ENCODE measurements at regions of chr12 and their contacts with region 1.

Region 1: DNA sequence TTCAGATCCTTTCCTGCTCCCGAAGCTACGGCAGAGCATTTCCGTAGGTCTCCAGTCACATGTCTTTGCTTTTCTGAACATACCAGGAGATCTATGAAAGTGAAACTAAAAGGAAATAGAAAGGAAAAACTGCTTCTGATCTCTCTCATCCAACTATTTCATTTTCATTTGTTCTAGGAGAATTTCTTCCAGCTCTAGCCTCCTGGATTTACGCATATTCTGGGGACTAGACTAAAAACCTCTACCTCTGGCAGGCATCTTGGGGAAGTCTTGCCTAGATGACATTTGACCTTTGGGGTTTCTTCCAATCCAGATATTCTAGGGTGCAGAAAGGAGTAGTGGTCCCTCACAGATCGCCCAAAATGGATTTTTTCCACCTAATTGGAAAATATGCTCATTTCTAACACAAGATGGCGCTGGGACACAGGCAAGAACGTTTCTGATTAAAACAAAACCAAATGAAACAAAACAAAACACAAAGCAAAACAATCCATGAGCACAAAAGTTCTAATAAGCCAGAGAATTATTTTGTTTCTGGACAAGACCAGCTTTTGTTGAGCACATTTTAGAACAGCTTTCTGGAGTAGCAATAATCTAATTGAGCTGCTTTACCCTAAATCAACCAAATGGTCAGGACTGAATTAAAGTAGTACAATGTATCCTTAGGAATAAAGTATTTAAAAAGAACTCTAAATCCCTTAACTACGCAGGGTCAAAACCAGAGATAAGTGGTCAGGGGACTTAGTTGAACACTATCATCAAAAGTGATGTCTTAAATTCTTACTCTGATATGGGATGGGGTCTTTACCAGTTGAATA is 12.3 kb upstream of the PARP11 start:
- DNase-seq: peak; percentile 47
- ATAC-seq: peak; percentile 27
- H3K4me3 Mint-ChIP-seq: no peak overlapping the region
- H3K27ac Mint-ChIP-seq: peak overlapping the region; percentile 58
- H3K4me1 Mint-ChIP-seq: peaks cover 7% of the 10 kb centered on the region
- H3K27me3 Mint-ChIP-seq: no peaks in the 10 kb centered on the region

Region 2: GRCh38 chr12:3409662-3410061 is 475.8 kb before region 1 on chr12:
- CTCF ChIA-PET with region 1: no interaction called
- POLR2A ChIA-PET with region 1: no interaction called
- intact Hi-C with region 1: no loop called
- DNase-seq: no peak
- ATAC-seq: no peak
- H3K4me3 Mint-ChIP-seq: no peak overlapping the region
- H3K27ac Mint-ChIP-seq: no peak overlapping the region
- H3K4me1 Mint-ChIP-seq: no peaks in the 10 kb centered on the region
- H3K27me3 Mint-ChIP-seq: peaks cover 6% of the 10 kb centered on the region

Region 3: GRCh38 chr12:3935078-3935477 is 49.6 kb after region 1 on chr12:
- CTCF ChIA-PET with region 1: interaction called, 17 read pairs
- POLR2A ChIA-PET with region 1: no interaction called
- intact Hi-C with region 1: no loop called
- DNase-seq: no peak
- ATAC-seq: peak; percentile 31
- H3K4me3 Mint-ChIP-seq: peak overlapping the region; percentile 56
- H3K27ac Mint-ChIP-seq: peak overlapping the region; percentile 80
- H3K4me1 Mint-ChIP-seq: peaks cover 55% of the 10 kb centered on the region
- H3K27me3 Mint-ChIP-seq: no peaks in the 10 kb centered on the region

Region 4: DNA sequence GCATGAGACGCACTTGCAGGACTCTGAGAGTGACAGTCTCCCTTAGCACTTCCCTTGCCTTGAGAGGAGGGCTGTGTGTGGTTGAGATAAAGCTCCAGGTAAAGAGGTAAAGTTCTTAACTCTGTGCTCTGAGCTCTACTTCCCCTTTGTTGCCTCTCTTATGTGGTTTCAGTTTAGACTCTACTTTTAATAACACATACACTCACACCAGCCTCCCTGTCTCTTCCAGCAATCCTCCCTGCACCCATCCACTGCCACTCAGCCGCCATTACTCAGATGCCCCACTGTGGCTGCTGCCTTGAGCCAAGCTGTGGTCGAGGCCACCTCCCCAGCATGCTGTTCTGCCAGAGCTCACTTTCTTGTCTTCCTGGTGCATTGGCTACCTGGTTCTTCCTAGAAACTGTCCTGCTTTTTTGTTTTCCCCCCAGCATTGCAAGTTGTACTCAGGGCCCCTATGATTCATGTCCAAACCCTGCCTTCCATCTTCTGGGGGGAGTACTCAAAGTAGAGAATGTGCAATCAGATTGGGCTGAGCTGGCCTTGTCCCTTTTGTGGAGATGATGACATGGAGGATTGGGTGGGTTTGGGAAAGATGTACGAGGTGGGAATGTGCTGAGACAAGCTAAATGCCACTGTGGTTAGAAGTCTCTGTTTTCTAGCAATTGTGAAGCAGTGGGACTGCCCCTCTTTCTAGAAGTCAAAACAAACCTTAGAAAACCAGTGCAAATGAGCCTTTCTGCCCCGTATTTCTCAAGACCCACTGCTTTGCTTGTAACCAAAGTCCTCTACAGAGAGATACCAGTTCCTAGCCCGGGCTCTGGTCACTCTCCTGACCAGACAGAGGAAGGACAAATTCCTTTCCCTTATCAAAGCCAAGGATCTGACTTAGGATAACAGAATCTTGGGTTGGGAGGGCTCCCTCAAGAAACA is 103.3 kb after region 1 on chr12:
- CTCF ChIA-PET with region 1: interaction called, 33 read pairs
- POLR2A ChIA-PET with region 1: no interaction called
- intact Hi-C with region 1: no loop called
- DNase-seq: peak; percentile 60
- ATAC-seq: peak; percentile 71
- H3K4me3 Mint-ChIP-seq: peak overlapping the region; percentile 11
- H3K27ac Mint-ChIP-seq: peak overlapping the region; percentile 76
- H3K4me1 Mint-ChIP-seq: peaks cover 35% of the 10 kb centered on the region
- H3K27me3 Mint-ChIP-seq: no peaks in the 10 kb centered on the region

Region 5: GRCh38 chr12:4006743-4007142 is 121.3 kb after region 1 on chr12:
- CTCF ChIA-PET with region 1: interaction called, 13 read pairs
- POLR2A ChIA-PET with region 1: no interaction called
- intact Hi-C with region 1: no loop called
- DNase-seq: no peak
- ATAC-seq: no peak
- H3K4me3 Mint-ChIP-seq: no peak overlapping the region
- H3K27ac Mint-ChIP-seq: no peak overlapping the region
- H3K4me1 Mint-ChIP-seq: no peaks in the 10 kb centered on the region
- H3K27me3 Mint-ChIP-seq: no peaks in the 10 kb centered on the region

Region 6: DNA sequence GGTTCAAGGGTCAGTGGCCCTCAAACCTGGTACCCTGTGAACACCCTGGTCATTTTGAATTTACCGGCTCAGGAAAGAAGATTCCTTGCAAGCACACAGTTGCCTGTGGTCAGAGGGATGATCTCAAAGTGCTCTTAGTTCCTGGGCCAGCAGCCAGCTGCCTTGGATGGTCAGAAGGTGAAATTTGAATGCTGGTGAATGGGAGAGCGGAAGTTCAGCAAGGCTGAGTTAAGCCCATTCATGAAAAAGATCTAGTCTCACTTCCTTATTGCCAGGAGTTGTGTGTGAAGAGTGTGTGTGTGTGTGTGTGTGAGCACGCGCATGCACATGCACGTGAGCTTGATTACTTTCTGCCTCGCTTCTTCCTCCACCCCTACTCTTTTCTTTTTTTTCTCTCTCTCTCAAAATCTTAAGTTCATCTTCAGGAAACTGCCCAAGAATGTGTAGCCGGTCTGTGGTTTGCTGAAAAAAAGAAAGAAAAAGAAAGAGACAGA is 232.6 kb after region 1 on chr12:
- CTCF ChIA-PET with region 1: interaction called, 5 read pairs
- POLR2A ChIA-PET with region 1: no interaction called
- intact Hi-C with region 1: loop called in 1 of 2 experiments (anchors 5 kb)
- DNase-seq: no peak
- ATAC-seq: no peak
- H3K4me3 Mint-ChIP-seq: peak overlapping the region; percentile 38
- H3K27ac Mint-ChIP-seq: peak overlapping the region; percentile 86
- H3K4me1 Mint-ChIP-seq: peaks cover 63% of the 10 kb centered on the region
- H3K27me3 Mint-ChIP-seq: peaks cover 3% of the 10 kb centered on the region